ENCODE measurements at regions of chr6 and their contacts with region 1.

Region 1: GRCh38 chr6:96897383-96898240 is at the start of gene NDUFAF4:
- DNase-seq: peak; percentile 92 to 97 (median 94)
- ATAC-seq: peak; percentile 98
- H3K4me3 ChIP-seq: peak within 1 kb of the TSS; percentile 88
- H3K4me3 Mint-ChIP-seq: peak within 1 kb of the TSS; percentile 85 to 99 (median 91)
- H3K27ac ChIP-seq: peak within 1 kb of the TSS; percentile 95
- H3K27ac Mint-ChIP-seq: peak within 1 kb of the TSS; percentile 56 to 99 (median 88)
- H3K4me1 ChIP-seq: peaks cover 18 to 20% of the 10 kb centered on the region in 2 donors
- H3K4me1 Mint-ChIP-seq: peaks cover 17 to 48% (median 39%) of the 10 kb centered on the region in 7 donors
- H3K27me3 ChIP-seq: no peaks in the 10 kb centered on the region
- H3K27me3 Mint-ChIP-seq: peaks cover 0 to 14% (median 12%) of the 10 kb centered on the region in 5 donors
- total RNA-seq, gene NDUFAF4: 25.1 to 34.2 (median 28.4) TPM

Region 2: DNA sequence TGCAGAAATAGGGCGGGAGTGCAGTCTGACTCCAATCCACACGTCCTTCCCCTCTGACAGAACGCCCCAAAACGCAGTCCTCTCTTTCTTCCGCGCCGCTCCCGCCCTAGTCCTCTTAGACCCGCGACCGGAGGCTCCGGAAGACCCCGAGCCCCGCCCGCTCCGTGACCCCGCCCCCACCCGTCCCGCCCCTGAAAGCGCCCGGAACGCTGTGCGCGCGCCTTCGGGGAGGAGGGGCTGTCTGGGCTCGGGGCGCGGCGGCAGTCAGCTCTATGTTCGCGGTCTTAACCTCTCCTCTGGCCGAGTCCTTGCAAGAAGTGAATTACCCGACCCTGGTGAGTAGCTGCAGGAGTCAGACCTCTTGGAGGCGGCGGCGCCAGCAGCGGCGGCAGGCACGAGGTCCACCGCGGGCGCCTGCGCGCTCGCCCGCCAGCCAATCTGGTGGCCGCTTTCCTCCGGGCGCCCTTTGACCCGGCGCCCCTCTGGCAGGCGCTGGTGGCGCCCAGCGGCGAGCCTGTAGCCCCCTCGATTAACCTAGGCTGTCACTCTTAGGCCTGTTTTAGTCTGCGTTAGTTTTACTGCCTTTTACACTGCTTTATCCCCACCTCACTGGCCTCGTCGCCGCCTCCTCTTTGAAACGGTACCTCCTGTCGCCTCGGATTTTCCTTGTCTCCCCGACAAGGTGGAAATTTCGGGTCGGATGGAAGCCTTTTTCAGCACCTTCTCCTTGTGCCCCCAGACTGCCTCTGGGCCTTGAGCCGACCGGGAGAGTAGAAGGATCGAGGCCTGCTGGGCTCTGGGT is 1320.1 kb before region 1 on chr6 and contains the start of gene MANEA:
- CTCF ChIA-PET with region 1: no interaction called
- POLR2A ChIA-PET with region 1: no interaction called
- intact Hi-C with region 1: loop called (anchors 1 to 2 kb)
- DNase-seq: peak; percentile 64 to 83 (median 79)
- ATAC-seq: peak; percentile 91
- H3K4me3 ChIP-seq: peak within 1 kb of the TSS; percentile 98
- H3K4me3 Mint-ChIP-seq: peak within 1 kb of the TSS; percentile 83 to 98 (median 96)
- H3K27ac ChIP-seq: peak within 1 kb of the TSS; percentile 80
- H3K27ac Mint-ChIP-seq: peak within 1 kb of the TSS; percentile 92 to 100 (median 97)
- H3K4me1 ChIP-seq: peaks cover 9 to 30% of the 10 kb centered on the region in 2 donors
- H3K4me1 Mint-ChIP-seq: peaks cover 28 to 71% (median 62%) of the 10 kb centered on the region in 7 donors
- H3K27me3 ChIP-seq: no peaks in the 10 kb centered on the region
- H3K27me3 Mint-ChIP-seq: no peaks in the 10 kb centered on the region
- total RNA-seq, gene MANEA: 3.8 to 25.7 (median 12.2) TPM

Region 3: DNA sequence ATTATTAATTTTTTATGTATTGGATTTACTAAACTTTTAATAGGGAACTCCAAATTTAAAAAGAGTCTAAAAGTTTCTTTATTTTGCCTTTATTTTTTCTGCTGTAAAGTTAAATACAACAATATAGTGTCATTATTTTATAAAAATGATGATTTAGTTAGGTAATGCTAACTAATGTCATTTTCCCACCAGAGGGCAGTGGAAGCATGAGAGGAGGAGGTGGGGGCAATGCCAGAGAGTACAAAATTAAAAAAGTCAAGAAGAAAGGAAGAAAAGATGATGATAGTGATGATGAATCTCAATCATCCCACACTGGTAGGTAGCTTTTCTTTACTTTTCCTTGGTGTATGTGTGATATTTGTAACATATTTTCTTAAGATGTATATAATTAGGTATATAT is 354.9 kb before region 1 on chr6:
- CTCF ChIA-PET with region 1: no interaction called
- POLR2A ChIA-PET with region 1: no interaction called
- intact Hi-C with region 1: loop called in 1 of 2 experiments (anchors 2 kb)
- DNase-seq: peak in 5 of 9 donors; percentile 6 to 31 (median 11)
- ATAC-seq: no peak
- H3K4me3 ChIP-seq: no peak overlapping the region
- H3K4me3 Mint-ChIP-seq: no peak overlapping the region
- H3K27ac ChIP-seq: no peak overlapping the region
- H3K27ac Mint-ChIP-seq: peak overlapping the region in 1 of 9 donors; percentile 20
- H3K4me1 ChIP-seq: no peaks in the 10 kb centered on the region
- H3K4me1 Mint-ChIP-seq: peaks cover 0 to 4% (median 0%) of the 10 kb centered on the region in 7 donors
- H3K27me3 ChIP-seq: no peaks in the 10 kb centered on the region
- H3K27me3 Mint-ChIP-seq: no peaks in the 10 kb centered on the region

Region 4: DNA sequence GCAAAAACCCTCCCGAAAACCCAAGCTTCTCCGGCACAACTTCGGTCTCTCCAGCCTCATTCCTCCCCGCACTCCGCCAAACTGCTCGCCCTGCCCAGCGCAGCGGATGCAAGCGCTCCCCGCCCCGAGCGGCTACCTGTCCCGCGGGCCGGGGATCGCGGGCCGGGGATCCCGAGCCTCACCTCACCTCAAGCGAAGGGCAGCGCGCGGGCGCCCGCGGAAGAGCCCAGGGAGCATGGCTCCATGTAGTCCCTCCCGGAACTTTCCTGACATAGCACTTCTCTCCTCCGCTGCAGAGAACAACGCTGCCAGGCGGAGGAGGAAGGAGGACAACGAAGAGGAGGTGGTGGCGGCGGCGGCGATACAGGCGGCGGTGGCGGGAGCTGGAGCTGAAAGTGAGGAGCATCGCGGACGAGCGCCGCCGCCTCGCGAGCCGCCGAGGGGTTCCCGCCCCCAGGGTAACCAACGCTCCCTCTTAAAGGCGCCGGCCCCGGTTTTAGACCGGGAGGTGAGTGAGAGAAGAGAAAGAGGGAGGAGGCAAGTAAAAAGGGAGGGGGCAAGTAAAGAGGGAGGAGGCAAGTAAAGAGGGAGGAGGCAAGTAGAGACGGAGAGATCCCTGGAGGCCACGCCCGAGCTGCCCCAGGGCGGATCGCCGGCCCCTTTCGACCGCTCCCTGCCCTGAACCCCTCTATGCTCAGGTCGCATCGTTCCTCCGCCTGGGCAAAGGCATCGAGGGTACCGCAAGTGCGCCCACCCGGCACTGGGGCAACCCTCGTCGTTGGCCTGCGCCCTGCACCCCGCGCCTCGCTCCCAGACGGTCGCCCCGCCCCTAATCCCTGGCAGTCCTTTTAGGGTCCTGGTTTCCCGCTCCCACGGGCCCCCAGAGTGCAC is 60.3 kb before region 1 on chr6 and contains the start of gene GPR63:
- CTCF ChIA-PET with region 1: no interaction called
- POLR2A ChIA-PET with region 1: no interaction called
- intact Hi-C with region 1: loop called (anchors 1 kb)
- DNase-seq: peak; percentile 36 to 84 (median 48)
- ATAC-seq: peak; percentile 83
- H3K4me3 ChIP-seq: peak within 1 kb of the TSS; percentile 59
- H3K4me3 Mint-ChIP-seq: peak within 1 kb of the TSS; percentile 86 to 97 (median 90)
- H3K27ac ChIP-seq: no peak within 1 kb of the TSS
- H3K27ac Mint-ChIP-seq: peak within 1 kb of the TSS in 6 of 9 donors; percentile 5 to 70 (median 29)
- H3K4me1 ChIP-seq: peaks cover 0 to 6% of the 10 kb centered on the region in 2 donors
- H3K4me1 Mint-ChIP-seq: peaks cover 7 to 31% (median 11%) of the 10 kb centered on the region in 7 donors
- H3K27me3 ChIP-seq: peaks cover 5 to 10% of the 10 kb centered on the region in 2 donors
- H3K27me3 Mint-ChIP-seq: peaks cover 16 to 69% (median 58%) of the 10 kb centered on the region in 5 donors
- total RNA-seq, gene GPR63: 0.24 to 3.1 (median 0.37) TPM

Region 5: DNA sequence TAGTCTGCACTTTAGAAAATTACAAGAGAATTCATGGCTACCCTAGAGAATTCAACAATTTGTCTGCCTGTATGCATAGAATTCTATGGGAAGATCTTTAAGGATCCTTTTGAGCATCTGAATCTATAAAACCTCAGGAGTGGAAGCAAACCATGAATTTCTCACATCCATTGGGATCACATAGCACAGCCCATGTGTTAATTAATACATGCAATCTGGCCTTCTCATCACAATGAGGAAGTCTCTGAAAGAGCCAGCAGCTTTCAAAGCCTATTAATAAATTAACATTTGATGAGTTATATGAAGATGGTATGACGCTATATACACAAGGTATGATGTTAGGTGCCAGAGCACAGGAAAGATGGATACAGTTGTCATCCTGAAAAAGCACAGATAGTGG is 24.6 kb before region 1 on chr6:
- CTCF ChIA-PET with region 1: no interaction called
- POLR2A ChIA-PET with region 1: no interaction called
- intact Hi-C with region 1: no loop called
- DNase-seq: no peak
- ATAC-seq: no peak
- H3K4me3 ChIP-seq: no peak overlapping the region
- H3K4me3 Mint-ChIP-seq: no peak overlapping the region
- H3K27ac ChIP-seq: no peak overlapping the region
- H3K27ac Mint-ChIP-seq: no peak overlapping the region
- H3K4me1 ChIP-seq: no peaks in the 10 kb centered on the region
- H3K4me1 Mint-ChIP-seq: no peaks in the 10 kb centered on the region
- H3K27me3 ChIP-seq: no peaks in the 10 kb centered on the region
- H3K27me3 Mint-ChIP-seq: peaks cover 4 to 25% (median 10%) of the 10 kb centered on the region in 5 donors

Region 6: DNA sequence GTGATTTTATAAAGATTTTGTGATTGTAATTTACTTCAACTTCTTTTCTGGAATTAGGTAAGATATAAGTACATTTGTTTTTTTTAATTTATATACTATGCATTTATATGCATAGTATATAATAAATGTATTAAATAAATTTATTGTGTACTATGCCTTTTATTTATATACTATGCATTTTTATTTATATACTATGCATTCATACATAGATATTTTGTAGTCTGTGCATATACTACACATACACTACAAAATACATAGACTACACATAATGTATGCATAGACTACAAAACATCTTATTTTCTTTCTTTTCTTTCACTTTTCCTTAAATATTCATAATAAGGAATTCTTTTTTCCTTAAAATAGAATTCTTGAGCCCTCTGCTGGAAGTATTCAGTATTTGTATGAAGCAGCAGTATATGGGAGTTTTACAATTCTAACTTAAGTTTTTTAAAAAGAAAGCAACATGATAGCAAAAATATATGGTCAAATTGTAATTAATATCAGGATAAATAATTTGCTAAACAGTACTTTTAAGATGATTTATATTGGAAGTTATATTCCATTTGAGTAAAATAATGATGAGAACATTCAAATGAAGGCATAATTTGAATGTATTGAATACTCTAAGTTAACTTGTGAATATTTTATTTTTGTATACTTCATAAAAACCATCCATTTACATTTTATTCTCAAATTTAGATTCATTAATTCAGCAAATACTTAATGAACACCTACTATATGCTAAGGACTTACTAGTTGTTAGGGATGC is 156.2 kb after region 1 on chr6:
- CTCF ChIA-PET with region 1: no interaction called
- POLR2A ChIA-PET with region 1: no interaction called
- intact Hi-C with region 1: loop called (anchors 1 kb)
- DNase-seq: no peak
- ATAC-seq: no peak
- H3K4me3 ChIP-seq: no peak overlapping the region
- H3K4me3 Mint-ChIP-seq: no peak overlapping the region
- H3K27ac ChIP-seq: no peak overlapping the region
- H3K27ac Mint-ChIP-seq: no peak overlapping the region
- H3K4me1 ChIP-seq: no peaks in the 10 kb centered on the region
- H3K4me1 Mint-ChIP-seq: peaks cover 0 to 13% (median 11%) of the 10 kb centered on the region in 7 donors
- H3K27me3 ChIP-seq: no peaks in the 10 kb centered on the region
- H3K27me3 Mint-ChIP-seq: peaks cover 0 to 5% (median 0%) of the 10 kb centered on the region in 5 donors

Region 7: GRCh38 chr6:97282726-97283617 is 385.4 kb after region 1 on chr6 and contains the start of gene MMS22L:
- CTCF ChIA-PET with region 1: no interaction called
- POLR2A ChIA-PET with region 1: no interaction called
- intact Hi-C with region 1: loop called (anchors 1 to 2 kb)
- DNase-seq: peak; percentile 83 to 93 (median 90)
- ATAC-seq: peak; percentile 99
- H3K4me3 ChIP-seq: peak within 1 kb of the TSS; percentile 90
- H3K4me3 Mint-ChIP-seq: peak within 1 kb of the TSS; percentile 90 to 98 (median 96)
- H3K27ac ChIP-seq: peak within 1 kb of the TSS; percentile 70
- H3K27ac Mint-ChIP-seq: peak within 1 kb of the TSS; percentile 83 to 96 (median 89)
- H3K4me1 ChIP-seq: peaks cover 0 to 16% of the 10 kb centered on the region in 2 donors
- H3K4me1 Mint-ChIP-seq: peaks cover 5 to 37% (median 24%) of the 10 kb centered on the region in 7 donors
- H3K27me3 ChIP-seq: no peaks in the 10 kb centered on the region
- H3K27me3 Mint-ChIP-seq: peaks cover 0 to 8% (median 0%) of the 10 kb centered on the region in 5 donors
- total RNA-seq, gene MMS22L: 11.8 to 48.1 (median 12.9) TPM